ENCODE measurements at regions of chr1 and their contacts with region 1.

Region 1: DNA sequence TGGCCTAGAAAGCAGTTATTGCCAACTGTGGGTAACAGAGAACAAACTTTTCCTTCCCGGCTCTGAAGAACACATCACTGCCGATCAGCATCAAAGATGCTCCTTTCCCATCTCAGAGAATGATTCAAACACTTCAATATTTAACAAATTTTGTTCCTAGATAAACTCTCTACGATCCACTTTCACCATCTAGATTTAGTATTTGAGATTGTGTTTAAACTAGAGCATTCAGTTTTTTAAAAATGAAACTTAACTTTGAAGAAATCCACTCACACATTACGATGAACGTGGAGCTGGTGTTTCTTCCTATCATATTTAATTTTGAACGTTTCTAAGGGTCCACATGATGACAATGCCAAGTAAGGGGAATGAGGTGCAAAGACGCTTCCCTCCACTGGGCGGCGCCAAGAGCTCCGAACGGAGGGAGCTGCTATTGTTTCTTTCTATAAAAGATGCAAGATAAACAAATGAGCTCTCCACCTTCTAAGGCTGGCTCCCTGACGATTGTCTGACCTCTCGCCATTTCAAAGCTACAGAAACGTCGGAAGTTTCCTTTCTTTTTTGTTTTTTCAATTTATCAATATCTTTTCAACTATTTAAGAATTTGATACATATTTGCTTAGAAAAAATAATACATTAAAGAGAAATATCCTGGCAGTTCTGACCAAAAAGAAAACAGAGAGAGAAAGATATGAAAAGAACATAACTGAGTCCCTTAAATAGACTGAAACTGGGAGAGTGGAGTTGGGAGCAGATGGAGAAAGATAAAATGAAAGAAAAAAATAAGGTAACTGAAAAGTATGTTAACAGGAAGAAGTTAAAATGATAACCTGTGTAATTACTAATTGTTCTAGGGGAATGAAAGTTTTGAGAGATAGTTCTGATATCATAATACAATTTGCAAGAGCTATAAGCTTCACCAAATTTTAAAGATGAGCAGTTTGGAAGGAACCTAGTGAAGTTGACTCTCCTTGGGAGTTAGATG is 4.4 kb upstream of the BARHL2 start:
- DNase-seq: no peak

Region 2: DNA sequence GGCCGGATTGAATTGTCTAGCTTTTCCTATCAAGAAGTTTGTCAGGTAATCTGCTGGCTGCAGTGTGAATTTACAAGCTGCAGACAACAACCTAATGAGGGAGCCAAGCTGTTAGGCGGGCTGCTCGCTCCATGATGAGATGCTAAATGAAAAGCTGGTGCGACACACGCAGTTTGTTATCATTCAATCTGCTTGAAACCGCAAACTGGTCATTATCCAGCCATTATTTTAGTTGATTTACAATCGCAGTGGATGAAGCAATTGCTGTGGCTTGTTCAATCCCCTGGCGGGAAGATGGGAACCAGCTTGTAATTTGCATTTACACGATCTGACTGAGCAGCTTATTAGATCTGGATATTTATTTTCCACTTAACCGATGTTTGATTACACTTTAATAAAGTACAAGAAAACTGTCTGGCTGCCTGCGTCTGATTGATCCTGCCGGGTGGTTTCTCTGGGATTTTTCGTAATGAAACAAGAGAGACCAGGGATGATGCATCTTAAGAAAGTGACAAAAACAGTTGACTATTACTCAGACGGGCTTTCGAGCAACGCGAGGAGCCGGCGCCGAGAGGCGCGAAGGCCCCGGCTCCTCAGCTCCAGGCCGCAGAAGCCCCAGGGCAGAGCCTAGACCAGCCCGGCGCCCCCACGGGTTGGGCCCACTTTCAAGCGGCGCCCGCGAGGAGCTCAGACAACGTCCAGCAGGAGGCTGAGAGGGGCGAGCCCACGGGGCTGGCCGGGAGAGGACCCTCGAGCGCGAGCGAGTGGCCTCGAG is 113.6 kb after region 1 on chr1:
- intact Hi-C with region 1: no loop called
- DNase-seq: no peak

Region 3: DNA sequence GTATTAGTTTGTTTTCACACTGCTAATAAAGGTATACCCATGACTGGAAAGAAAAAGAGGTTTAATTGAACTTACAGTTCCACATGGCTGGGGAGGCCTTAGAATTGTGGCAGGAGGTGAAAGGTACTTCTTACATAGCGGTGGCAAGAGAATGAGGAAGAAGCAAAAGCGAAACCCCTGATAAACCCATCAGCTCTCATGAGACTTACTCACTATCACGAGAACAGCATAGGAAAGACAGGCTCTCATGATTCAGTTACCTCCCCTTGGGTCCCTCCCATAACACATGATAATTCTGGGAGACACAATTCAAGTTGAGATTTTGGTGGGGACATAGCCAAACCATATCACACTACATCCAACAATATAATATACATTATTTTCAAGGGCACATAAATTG is 141.3 kb after region 1 on chr1:
- intact Hi-C with region 1: no loop called
- DNase-seq: no peak

Region 4: DNA sequence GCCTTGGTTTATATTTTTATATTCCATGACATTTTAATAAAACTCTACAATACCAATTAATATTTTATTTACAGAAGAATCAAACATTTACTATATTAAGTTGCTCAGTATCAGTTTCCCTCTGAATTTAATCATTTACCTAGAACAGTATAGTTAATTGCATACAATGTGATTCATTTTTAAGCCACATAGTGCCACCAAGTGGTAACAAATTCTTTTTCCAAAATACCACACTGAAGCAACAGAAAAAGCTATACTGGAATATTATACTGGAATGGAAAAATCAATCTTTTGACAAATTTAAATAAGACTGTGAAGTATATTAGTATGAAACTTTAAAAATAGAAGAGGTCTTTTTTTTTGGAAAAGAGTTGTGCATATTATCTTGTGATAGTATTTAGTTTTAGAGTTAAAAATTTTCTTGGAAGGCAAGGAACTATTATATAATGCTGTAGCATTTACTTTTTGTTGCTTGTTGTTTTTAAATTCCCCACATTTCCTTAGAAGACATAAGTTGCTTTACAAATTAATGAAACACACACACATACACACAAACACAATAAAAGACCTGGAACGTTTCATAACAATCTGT is 243.0 kb after region 1 on chr1:
- intact Hi-C with region 1: loop called (anchors 5 kb)
- DNase-seq: no peak

Region 5: GRCh38 chr1:91021686-91022517 is 300.4 kb after region 1 on chr1 and contains the start of gene ZNF644:
- intact Hi-C with region 1: loop called (anchors 5 kb)
- DNase-seq: peak; percentile 95
- total RNA-seq, gene ZNF644: 42.6 TPM

Region 6: DNA sequence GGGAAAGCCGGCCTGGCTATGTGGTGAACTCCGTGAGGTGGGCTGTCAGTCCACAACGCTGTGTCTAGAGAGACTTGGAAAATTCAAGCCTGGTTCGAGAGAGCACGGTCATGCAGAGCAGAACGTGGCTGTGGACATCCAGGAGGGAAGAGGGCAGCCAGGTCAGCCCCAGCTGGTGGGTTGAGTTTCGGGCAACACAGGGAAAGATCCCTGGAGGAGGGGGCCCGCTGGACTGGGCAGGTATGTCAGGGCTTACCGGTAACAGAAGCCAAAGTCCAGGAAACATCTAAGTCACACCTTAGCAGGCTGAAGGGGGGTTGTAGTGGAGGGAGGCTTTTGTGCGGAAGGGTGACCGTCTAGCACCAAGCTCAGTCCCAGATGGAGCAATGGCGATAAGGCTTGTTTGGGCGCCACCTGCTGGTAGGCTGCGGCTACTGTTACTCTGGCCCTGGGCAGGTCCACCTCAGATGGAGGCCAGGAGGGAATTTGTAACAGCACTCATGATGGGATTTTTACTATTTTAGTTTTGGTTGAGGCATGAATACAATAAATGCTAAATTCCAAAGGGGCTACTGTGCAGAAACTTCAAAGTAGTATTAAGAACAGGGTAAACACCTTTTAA is 443.6 kb after region 1 on chr1:
- intact Hi-C with region 1: loop called (anchors 10 kb)
- DNase-seq: peak; percentile 87